Activated CD4-positive, alpha-beta T cell treated with anti-CD3 and anti-CD28 coated beads, Interleukin-2, amount 10 ng/mL, durations not matched to agents 24 days and 14 days (primary cell): ENCODE measurements at regions of chr7 and their contacts with region 1.

Region 1: DNA sequence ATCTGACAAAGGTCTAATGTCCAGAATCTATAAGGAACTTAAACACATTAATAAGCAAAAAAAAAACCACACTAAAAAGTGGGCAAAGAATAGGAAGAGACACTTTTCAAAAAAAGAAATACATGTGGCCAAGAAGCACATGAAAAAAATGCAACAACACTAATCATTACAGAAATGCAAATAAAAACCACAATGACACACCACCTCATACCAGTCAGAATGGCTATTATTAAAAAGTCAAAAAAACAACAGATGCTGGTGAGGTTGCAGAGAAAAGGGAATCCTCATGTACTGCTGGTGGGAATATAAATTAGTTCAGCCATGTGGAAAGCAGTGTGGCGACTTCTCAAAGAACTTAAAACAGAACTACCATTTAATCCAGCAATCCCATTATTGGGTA is 119.0 kb downstream of the LMBR1 start:
- DNase-seq: no peak
- H3K4me3 Mint-ChIP-seq: no peak overlapping the region
- H3K27ac Mint-ChIP-seq: peak overlapping the region; percentile 20
- H3K4me1 Mint-ChIP-seq: peaks cover 36% of the 10 kb centered on the region
- H3K27me3 Mint-ChIP-seq: no peaks in the 10 kb centered on the region

Region 2: GRCh38 chr7:156751319-156751718 is 22.6 kb before region 1 on chr7:
- intact Hi-C with region 1: loop called (anchors 1 kb)
- DNase-seq: peak; percentile 82
- H3K4me3 Mint-ChIP-seq: peak overlapping the region; percentile 53
- H3K27ac Mint-ChIP-seq: no peak overlapping the region
- H3K4me1 Mint-ChIP-seq: peaks cover 21% of the 10 kb centered on the region
- H3K27me3 Mint-ChIP-seq: no peaks in the 10 kb centered on the region

Region 3: DNA sequence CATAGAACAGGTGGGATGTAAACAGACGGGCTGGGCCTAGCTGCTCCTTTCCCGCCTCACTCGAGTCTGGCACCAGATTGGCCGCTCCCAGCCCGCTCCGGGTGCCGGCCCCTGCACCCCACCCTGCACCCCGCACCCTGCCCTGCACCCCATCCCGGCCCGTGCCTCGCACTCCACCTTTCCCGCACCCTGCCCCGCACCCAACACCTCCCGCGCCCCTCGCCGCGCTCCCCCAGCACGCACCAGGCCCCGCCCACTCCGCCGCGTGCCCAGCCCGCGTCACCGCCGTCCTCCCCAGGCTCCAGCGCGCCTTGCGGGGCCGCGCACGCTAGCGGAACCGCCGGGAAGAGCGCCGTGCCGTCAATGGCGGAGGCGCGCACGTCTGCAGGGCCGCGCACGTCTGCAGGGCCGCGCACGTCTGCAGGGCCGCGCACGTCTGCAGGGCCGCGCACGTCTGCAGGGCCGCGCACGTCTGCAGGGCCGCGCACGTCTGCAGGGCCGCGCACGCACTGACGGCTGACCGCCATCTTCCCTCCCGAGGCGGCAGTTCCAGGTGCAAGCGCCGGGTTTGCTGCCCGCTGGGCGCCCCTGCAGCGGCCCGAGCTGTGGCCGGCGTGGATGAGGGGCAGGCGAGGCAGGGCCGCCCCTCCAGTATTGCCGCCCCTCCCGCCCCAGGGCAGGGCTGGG is 364.6 kb after region 1 on chr7 and contains the start of gene UBE3C:
- intact Hi-C with region 1: loop called (anchors 10 kb)
- DNase-seq: peak; percentile 98
- H3K4me3 Mint-ChIP-seq: peak within 1 kb of the TSS; percentile 88
- H3K27ac Mint-ChIP-seq: peak within 1 kb of the TSS; percentile 99
- H3K4me1 Mint-ChIP-seq: peaks cover 31% of the 10 kb centered on the region
- H3K27me3 Mint-ChIP-seq: no peaks in the 10 kb centered on the region
- total RNA-seq, gene UBE3C: 89.9 and 95.4 TPM in 2 replicates